ENCODE measurements at regions of chr3 and their contacts with region 1.

Region 1: GRCh38 chr3:171646357-171647133 is 163.7 kb downstream of the PLD1 start:
- DNase-seq: no peak

Region 2: GRCh38 chr3:171748064-171748918 is 101.7 kb after region 1 on chr3:
- intact Hi-C with region 1: loop called (anchors 5 kb)
- DNase-seq: no peak

Region 3: DNA sequence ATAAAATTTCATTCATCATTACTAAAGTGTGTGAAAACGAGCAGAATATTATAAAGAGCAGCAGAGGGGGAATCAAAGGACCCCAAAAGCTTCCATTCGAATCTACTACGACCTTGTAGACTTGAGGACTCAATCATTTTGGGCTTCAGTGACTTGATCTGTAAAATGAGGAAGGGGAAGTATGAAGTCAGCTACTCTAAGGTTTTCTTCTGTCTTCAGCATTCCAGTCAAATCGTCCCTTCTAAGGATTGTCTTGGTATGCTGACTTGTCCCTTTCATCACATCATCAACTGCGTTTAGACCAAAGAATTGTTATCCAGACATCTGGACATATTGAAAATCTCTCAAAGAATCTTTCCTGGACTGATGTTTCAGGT is 119.0 kb after region 1 on chr3:
- intact Hi-C with region 1: loop called (anchors 1 kb)
- DNase-seq: no peak

Region 4: DNA sequence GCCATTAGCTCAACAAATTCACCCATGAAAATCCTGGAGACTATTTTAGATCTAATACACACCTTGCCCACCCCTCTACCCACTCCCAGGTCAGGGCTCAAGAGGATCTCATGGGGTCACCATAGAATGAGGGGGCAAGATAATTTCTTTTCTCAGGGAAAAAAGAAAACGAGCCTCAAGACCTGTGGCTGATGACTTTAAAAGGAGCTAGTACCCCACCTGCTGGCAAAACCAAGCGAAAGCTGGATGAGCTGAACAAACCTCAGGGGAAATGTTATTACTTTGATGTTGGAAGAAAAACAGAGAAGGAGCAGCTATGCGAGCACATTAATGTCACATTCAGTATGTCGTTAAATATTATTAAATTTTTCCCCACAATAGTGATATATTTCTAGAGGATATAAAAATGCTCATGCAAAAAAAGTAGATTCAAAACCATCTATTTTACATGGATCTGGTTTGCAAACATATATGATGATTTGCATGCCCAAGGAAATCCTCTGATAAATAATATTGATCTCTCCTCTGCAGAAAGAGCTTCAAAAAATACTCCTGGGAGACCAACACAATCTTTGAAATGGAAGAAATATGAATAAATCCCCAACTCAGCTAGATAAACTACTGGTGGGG is 126.0 kb after region 1 on chr3:
- intact Hi-C with region 1: loop called (anchors 2 kb)
- DNase-seq: no peak

Region 5: GRCh38 chr3:171829841-171830517 is 183.4 kb after region 1 on chr3:
- intact Hi-C with region 1: loop called (anchors 5 kb)
- DNase-seq: peak; percentile 89

Region 6: GRCh38 chr3:172138795-172139441 is 492.4 kb after region 1 on chr3:
- intact Hi-C with region 1: loop called (anchors 10 kb)
- DNase-seq: peak; percentile 86

Region 7: GRCh38 chr3:172289582-172289981 is 643.0 kb after region 1 on chr3:
- intact Hi-C with region 1: loop called (anchors 10 kb)
- DNase-seq: peak; percentile 83

Measured in cardiac septum (tissue), 1 donor.